ENCODE measurements at regions of chr9 and their contacts with region 1.

Region 1: DNA sequence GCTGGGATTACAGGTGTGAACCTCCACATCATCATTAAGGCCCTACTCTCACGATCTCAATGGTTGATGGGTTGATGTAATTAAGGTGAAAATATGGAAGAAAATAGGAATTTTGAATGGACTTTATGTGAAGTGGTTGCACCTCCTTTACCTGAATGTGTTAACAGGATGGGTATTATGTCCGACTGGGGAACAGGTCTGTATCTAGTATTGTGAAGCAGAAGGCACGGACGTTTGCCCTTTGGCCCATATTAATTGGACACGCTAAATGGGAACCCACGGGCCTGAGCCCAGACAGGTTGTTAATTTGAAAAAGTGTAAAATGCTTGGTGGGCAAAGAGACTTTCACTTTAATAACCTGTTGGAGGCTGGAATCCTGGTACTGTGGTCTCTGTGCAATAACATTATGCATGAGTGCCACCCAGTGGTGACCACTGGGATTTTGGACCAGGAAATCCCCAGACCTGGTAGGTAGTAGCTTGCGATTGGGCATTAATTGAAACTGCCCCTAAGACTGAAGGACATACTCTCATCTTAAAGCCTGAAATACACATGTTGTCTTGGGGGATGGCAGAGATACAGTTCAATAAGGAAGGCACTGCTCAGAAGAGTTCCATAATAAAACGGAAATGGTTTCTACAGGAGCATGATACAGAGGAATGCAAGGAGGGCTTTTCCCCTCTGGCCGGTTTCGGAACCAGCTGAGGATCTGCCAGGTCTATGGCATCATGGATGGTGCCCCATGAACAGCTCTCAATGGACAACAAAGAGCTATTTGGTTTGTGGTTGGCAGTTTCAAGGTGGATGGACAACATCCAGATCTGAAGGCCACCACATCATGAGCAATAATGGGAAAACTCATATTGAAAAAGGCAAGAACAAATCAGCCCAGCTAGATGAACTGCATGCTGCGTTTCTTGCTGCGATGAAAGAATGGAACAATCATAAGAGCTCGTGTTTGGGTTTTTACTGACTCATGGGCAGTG is 26.2 kb upstream of the BICD2 start:
- DNase-seq: peak; percentile 84
- ATAC-seq: peak; percentile 95
- H3K4me3 Mint-ChIP-seq: no peak overlapping the region
- H3K27ac Mint-ChIP-seq: no peak overlapping the region
- H3K4me1 Mint-ChIP-seq: peaks cover 3% of the 10 kb centered on the region
- H3K27me3 Mint-ChIP-seq: no peaks in the 10 kb centered on the region
- CTCF ChIP-seq: peak; percentile 78

Region 2: DNA sequence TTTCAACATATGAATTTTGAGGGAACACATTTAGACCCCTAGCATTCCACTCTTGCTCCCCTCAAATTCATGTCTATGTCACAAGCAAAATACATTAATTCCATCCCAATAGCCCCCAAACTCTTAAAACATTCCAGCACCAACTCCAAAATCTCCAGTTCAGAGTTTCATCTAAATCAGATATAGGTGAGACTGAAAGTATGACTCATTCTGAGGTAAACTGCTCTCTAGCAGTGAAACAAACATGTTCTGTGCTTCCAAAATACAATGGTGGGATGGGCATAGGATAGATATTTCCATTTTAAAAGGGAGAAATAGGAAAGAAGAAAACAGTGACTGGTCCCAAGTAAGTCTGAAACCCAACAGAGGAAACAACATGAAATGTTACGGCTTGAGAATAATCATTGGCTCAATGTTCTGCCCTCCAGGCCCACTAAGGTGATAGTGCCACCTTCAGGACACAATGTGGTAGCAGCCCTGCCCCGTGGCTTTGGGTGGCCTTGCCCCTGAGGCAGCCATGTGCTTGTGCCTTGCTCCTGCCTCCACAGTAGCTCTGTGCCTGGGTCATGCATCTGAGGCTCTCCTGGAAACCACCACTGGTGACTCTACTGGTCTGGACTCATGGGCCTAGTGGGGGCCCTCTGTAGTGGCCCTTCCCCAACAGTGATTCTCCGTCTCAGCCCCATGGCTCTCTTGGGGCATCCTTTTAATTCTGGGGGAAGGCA is 84.5 kb before region 1 on chr9:
- CTCF ChIA-PET with region 1: interaction called, 14 read pairs
- POLR2A ChIA-PET with region 1: no interaction called
- DNase-seq: peak; percentile 76
- ATAC-seq: peak; percentile 100
- H3K4me3 Mint-ChIP-seq: no peak overlapping the region
- H3K27ac Mint-ChIP-seq: peak overlapping the region; percentile 75
- H3K4me1 Mint-ChIP-seq: no peaks in the 10 kb centered on the region
- H3K27me3 Mint-ChIP-seq: no peaks in the 10 kb centered on the region
- CTCF ChIP-seq: no peak

Region 3: GRCh38 chr9:92716557-92716956 is 74.3 kb before region 1 on chr9:
- CTCF ChIA-PET with region 1: interaction called, 43 read pairs
- POLR2A ChIA-PET with region 1: no interaction called
- DNase-seq: peak; percentile 97
- ATAC-seq: peak; percentile 91
- H3K4me3 Mint-ChIP-seq: no peak overlapping the region
- H3K27ac Mint-ChIP-seq: no peak overlapping the region
- H3K4me1 Mint-ChIP-seq: no peaks in the 10 kb centered on the region
- H3K27me3 Mint-ChIP-seq: no peaks in the 10 kb centered on the region
- CTCF ChIP-seq: peak; percentile 96

Region 4: GRCh38 chr9:92808726-92809451 is 18.1 kb after region 1 on chr9:
- CTCF ChIA-PET with region 1: interaction called, 28 read pairs
- POLR2A ChIA-PET with region 1: no interaction called
- DNase-seq: peak; percentile 80
- ATAC-seq: peak; percentile 83
- H3K4me3 Mint-ChIP-seq: peak overlapping the region; percentile 87
- H3K27ac Mint-ChIP-seq: no peak overlapping the region
- H3K4me1 Mint-ChIP-seq: peaks cover 18% of the 10 kb centered on the region
- H3K27me3 Mint-ChIP-seq: peaks cover 66% of the 10 kb centered on the region
- CTCF ChIP-seq: no peak

Measured in WTC11 (cell line).